Panc1 (cell line): ENCODE measurements at regions of chr7 and their contacts with region 1.

Region 1: GRCh38 chr7:66522518-66522917 is 106.2 kb upstream of the KCTD7 start:
- DNase-seq: no peak
- ATAC-seq: peak; percentile 81
- H3K4me3 ChIP-seq: no peak overlapping the region
- H3K27ac ChIP-seq: no peak overlapping the region
- H3K4me1 ChIP-seq: no peaks in the 10 kb centered on the region
- H3K27me3 ChIP-seq: no peaks in the 10 kb centered on the region
- CTCF ChIP-seq: no peak; the same call in 1 of the 2 replicates

Region 2: DNA sequence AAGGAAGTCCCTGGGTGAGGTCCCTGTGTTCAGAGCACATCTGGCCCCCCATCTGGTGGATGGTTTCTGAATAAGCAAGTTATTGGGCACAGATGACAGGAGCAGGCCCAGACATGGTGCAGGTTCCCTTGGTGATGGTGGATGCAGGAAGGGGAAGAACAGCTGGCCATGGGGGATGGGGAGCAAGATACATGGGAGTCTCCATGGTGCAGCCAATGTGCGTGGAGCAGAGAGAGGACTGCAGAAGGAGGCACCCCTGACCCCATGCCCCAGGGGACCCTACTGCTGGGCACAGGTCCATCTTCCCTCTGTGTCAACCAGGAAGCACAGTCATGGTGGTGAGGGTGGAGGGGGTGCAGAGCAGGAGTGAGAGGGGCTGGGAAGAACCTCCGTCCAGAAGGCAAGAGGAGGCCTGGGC is 174.3 kb after region 1 on chr7:
- CTCF ChIA-PET with region 1: no interaction called
- POLR2A ChIA-PET with region 1: interaction called, 11 read pairs
- in situ Hi-C with region 1: no loop called
- intact Hi-C with region 1: no loop called
- DNase-seq: no peak
- ATAC-seq: 0 out of 2 replicates have a peak, but pooled peaks have one; percentile 10
- H3K4me3 ChIP-seq: no peak overlapping the region
- H3K27ac ChIP-seq: no peak overlapping the region
- H3K4me1 ChIP-seq: no peaks in the 10 kb centered on the region
- H3K27me3 ChIP-seq: no peaks in the 10 kb centered on the region
- CTCF ChIP-seq: no peak